Natural killer cell (primary cell): ENCODE measurements at regions of chr1 and their contacts with region 1.

Region 1: GRCh38 chr1:235075188-235075926 is 53.3 kb downstream of the TOMM20 start:
- DNase-seq: peak; percentile 53 to 58
- ATAC-seq: peak; percentile 80 to 92 (median 82)
- H3K4me3 ChIP-seq: no peak overlapping the region
- H3K4me3 Mint-ChIP-seq: peak overlapping the region; percentile 26
- H3K27ac ChIP-seq: no peak overlapping the region
- H3K27ac Mint-ChIP-seq: peak overlapping the region; percentile 57 to 65
- H3K4me1 ChIP-seq: peaks cover 37% of the 10 kb centered on the region
- H3K4me1 Mint-ChIP-seq: peaks cover 11 to 20% of the 10 kb centered on the region in 2 donors
- H3K27me3 ChIP-seq: no peaks in the 10 kb centered on the region
- H3K27me3 Mint-ChIP-seq: no peaks in the 10 kb centered on the region
- CTCF ChIP-seq: no peak

Region 2: GRCh38 chr1:234755449-234755863 is 319.9 kb before region 1 on chr1:
- intact Hi-C with region 1: loop called (anchors 5 kb)
- DNase-seq: no peak
- ATAC-seq: peak in 1 of 3 donors; percentile 45
- H3K4me3 ChIP-seq: no peak overlapping the region
- H3K4me3 Mint-ChIP-seq: no peak overlapping the region
- H3K27ac ChIP-seq: no peak overlapping the region
- H3K27ac Mint-ChIP-seq: no peak overlapping the region
- H3K4me1 ChIP-seq: peaks cover 25% of the 10 kb centered on the region
- H3K4me1 Mint-ChIP-seq: peaks cover 9 to 26% of the 10 kb centered on the region in 2 donors
- H3K27me3 ChIP-seq: no peaks in the 10 kb centered on the region
- H3K27me3 Mint-ChIP-seq: peaks cover 13 to 32% of the 10 kb centered on the region in 2 donors
- CTCF ChIP-seq: no peak

Region 3: GRCh38 chr1:235113183-235113917 is 38.0 kb after region 1 on chr1:
- intact Hi-C with region 1: no loop called
- DNase-seq: no peak
- ATAC-seq: no peak
- H3K4me3 ChIP-seq: no peak overlapping the region
- H3K4me3 Mint-ChIP-seq: no peak overlapping the region
- H3K27ac ChIP-seq: no peak overlapping the region
- H3K27ac Mint-ChIP-seq: no peak overlapping the region
- H3K4me1 ChIP-seq: no peaks in the 10 kb centered on the region
- H3K4me1 Mint-ChIP-seq: peaks cover 0 to 12% of the 10 kb centered on the region in 2 donors
- H3K27me3 ChIP-seq: no peaks in the 10 kb centered on the region
- H3K27me3 Mint-ChIP-seq: no peaks in the 10 kb centered on the region
- CTCF ChIP-seq: no peak